ENCODE measurements at regions of chr12 and their contacts with region 1.

Region 1: GRCh38 chr12:56593909-56594621 is 36.1 kb downstream of the BAZ2A start:
- DNase-seq: peak; percentile 35 to 63 (median 52)
- ATAC-seq: peak; percentile 80
- H3K4me3 ChIP-seq: no peak overlapping the region
- H3K4me3 Mint-ChIP-seq: peak overlapping the region in 1 of 10 donors; percentile 71
- H3K27ac ChIP-seq: no peak overlapping the region
- H3K27ac Mint-ChIP-seq: peak overlapping the region in 3 of 9 donors; percentile 59 to 82 (median 81)
- H3K4me1 ChIP-seq: no peaks in the 10 kb centered on the region
- H3K4me1 Mint-ChIP-seq: peaks cover 0 to 9% (median 0%) of the 10 kb centered on the region in 7 donors
- H3K27me3 ChIP-seq: no peaks in the 10 kb centered on the region
- H3K27me3 Mint-ChIP-seq: no peaks in the 10 kb centered on the region

Region 2: DNA sequence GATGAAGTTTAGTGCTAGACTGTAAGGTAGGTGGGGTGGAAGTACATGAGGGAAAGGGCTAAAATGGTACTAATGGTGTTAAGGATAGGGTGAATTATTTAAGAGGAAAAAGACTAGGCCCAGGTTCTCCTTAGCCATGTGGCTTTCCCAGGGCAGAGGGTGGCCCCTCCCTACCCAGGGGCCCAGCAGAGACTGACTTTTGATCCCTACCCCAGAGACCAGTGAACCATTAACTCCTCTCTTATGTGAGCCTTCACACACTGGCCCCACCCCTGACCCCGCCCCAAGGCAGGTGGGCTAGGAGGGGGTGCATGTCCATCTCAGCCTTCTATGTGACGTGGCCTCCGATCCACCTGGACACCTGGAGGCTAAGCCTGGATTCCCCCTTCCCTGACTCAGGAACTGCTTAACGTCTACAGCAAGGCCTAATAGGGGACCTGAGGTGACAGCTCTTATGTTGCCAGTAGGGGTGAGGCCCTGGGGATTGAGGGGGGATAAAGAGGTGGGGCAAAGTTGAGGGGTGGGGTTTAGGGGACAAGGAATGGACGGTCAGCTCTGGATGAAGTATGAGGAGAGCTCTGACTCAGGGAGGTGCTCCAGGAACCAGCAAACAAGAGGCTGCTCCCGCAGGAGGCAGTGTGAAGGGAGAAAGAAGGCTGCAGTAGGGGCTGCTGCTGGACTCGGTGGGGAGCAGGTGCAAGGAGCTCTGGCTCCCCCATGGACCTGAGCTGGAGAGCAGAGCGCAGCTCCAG is 363.5 kb before region 1 on chr12:
- CTCF ChIA-PET with region 1: no interaction called
- POLR2A ChIA-PET with region 1: no interaction called
- intact Hi-C with region 1: no loop called
- DNase-seq: no peak
- ATAC-seq: no peak
- H3K4me3 ChIP-seq: no peak overlapping the region
- H3K4me3 Mint-ChIP-seq: no peak overlapping the region
- H3K27ac ChIP-seq: no peak overlapping the region
- H3K27ac Mint-ChIP-seq: no peak overlapping the region
- H3K4me1 ChIP-seq: no peaks in the 10 kb centered on the region
- H3K4me1 Mint-ChIP-seq: peaks cover 0 to 5% (median under 1%) of the 10 kb centered on the region in 7 donors
- H3K27me3 ChIP-seq: no peaks in the 10 kb centered on the region
- H3K27me3 Mint-ChIP-seq: no peaks in the 10 kb centered on the region

Region 3: DNA sequence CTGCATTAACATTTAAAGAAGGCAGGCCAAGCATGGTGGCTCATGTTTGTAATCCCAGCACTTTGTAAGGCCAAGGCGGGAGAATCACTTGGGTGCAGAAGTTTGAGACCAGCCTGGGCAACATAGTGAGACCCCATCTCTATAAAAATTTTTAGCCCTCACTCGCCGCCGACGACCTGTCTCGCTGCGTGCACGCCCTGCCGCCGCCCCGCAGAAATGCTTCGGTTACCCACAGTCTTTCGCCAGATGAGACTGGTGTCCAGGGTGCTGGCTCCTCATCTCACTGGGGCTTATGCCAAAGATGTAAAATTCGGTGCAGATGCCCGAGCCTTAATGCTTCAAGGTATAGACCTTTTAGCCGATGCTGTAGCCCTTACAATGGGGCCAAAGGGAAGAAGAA is 83.3 kb before region 1 on chr12:
- CTCF ChIA-PET with region 1: interaction called, 46 read pairs
- POLR2A ChIA-PET with region 1: interaction called, 3 read pairs
- intact Hi-C with region 1: loop called (anchors 1 kb)
- DNase-seq: no peak
- ATAC-seq: no peak
- H3K4me3 ChIP-seq: no peak overlapping the region
- H3K4me3 Mint-ChIP-seq: no peak overlapping the region
- H3K27ac ChIP-seq: no peak overlapping the region
- H3K27ac Mint-ChIP-seq: no peak overlapping the region
- H3K4me1 ChIP-seq: no peaks in the 10 kb centered on the region
- H3K4me1 Mint-ChIP-seq: peaks cover 0 to 7% (median 3%) of the 10 kb centered on the region in 7 donors
- H3K27me3 ChIP-seq: no peaks in the 10 kb centered on the region
- H3K27me3 Mint-ChIP-seq: peaks cover 0 to 19% (median 7%) of the 10 kb centered on the region in 5 donors

Region 4: DNA sequence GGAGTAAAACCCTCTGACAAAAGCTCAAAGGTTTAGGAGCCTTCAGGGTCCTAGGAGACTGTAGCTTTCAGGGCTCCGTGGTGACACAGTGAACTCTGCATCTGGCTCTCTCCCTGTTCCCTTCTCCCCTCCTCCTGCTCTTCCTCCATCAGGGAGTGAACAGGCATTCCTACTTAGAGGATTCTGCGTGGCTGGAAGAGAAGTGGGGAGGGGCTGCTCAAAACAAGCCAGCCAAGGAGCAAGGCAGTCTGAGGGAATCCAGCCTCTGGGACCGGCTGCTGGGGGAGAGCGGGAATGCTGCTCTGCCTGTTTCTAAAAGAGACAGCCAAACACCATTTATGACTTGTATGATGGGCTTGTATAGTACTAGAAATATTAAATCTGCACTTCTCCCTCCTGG is 22.9 kb before region 1 on chr12:
- CTCF ChIA-PET with region 1: interaction called, 5 read pairs
- POLR2A ChIA-PET with region 1: interaction called, 3 read pairs
- intact Hi-C with region 1: loop called in 1 of 2 experiments (anchors 1 kb)
- DNase-seq: no peak
- ATAC-seq: no peak
- H3K4me3 ChIP-seq: no peak overlapping the region
- H3K4me3 Mint-ChIP-seq: peak overlapping the region in 2 of 10 donors; percentile 23 to 49
- H3K27ac ChIP-seq: no peak overlapping the region
- H3K27ac Mint-ChIP-seq: peak overlapping the region in 3 of 9 donors; percentile 15 to 67 (median 28)
- H3K4me1 ChIP-seq: peaks cover 0 to 22% of the 10 kb centered on the region in 2 donors
- H3K4me1 Mint-ChIP-seq: peaks cover 9 to 31% (median 23%) of the 10 kb centered on the region in 7 donors
- H3K27me3 ChIP-seq: no peaks in the 10 kb centered on the region
- H3K27me3 Mint-ChIP-seq: no peaks in the 10 kb centered on the region

Measured in naive thymus-derived CD4-positive, alpha-beta T cell (primary cell).